ENCODE measurements at regions of chr12 and their contacts with region 1.

Region 1: DNA sequence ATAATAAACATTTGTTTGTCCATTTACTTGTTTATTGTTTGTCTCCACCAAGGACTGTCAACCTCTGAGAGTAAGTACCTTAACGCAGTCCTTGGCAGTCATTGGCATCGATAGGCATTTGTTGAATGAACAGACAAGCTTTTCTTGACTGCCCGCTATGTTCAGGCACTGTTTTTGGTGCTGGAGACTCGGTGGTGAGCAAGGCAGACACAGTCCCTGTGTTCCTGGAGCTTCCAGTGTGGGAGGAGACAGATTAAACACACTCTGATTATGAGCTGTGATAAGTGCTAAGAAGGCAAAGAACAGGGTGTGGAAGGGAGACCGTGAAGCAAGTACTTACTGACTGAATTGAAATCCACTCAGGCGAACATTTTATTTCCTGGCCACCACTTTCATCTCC is 1.2 kb downstream of the ATP6V0A2 start:
- DNase-seq: peak; percentile 35
- ATAC-seq: peak; percentile 11
- H3K4me3 Mint-ChIP-seq: peak overlapping the region; percentile 96
- H3K27ac Mint-ChIP-seq: peak overlapping the region; percentile 96
- H3K4me1 Mint-ChIP-seq: peaks cover 46% of the 10 kb centered on the region
- H3K27me3 Mint-ChIP-seq: no peaks in the 10 kb centered on the region

Region 2: DNA sequence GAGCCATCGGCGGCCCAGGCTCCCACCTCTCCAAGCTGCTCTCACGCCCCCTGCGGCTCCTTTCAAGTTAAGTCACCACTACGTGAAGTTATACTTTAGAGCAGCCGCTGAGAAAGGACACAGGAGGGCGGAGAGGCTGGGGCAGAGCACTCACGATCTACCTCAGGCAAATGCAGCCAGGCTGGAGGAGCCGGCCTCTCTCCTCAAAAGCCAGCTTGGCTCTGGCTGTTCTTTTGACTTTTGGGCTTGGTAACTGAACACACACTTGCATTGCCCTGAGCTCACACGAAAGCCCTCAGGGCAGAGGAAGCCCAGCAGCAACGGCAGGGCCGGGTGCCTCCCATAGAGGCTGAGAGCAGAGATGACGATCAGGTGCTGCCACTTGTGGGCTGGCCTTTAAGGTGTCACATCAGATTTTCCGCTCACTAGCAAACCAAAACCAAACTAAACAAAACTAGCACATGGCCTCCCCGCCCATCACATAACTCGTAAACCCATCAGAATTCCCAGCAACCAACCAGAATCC is 637.7 kb before region 1 on chr12:
- CTCF ChIA-PET with region 1: no interaction called
- POLR2A ChIA-PET with region 1: interaction called, 4 read pairs
- intact Hi-C with region 1: loop called in 1 of 2 experiments (anchors 2 kb)
- DNase-seq: peak; percentile 87
- ATAC-seq: peak; percentile 75
- H3K4me3 Mint-ChIP-seq: peak overlapping the region; percentile 68
- H3K27ac Mint-ChIP-seq: peak overlapping the region; percentile 94
- H3K4me1 Mint-ChIP-seq: peaks cover 56% of the 10 kb centered on the region
- H3K27me3 Mint-ChIP-seq: no peaks in the 10 kb centered on the region

Region 3: GRCh38 chr12:123457980-123458783 is 255.2 kb before region 1 on chr12 and contains the start of gene SNRNP35:
- CTCF ChIA-PET with region 1: no interaction called
- POLR2A ChIA-PET with region 1: no interaction called
- intact Hi-C with region 1: loop called (anchors 5 to 10 kb)
- DNase-seq: peak; percentile 88
- ATAC-seq: peak; percentile 73
- H3K4me3 Mint-ChIP-seq: peak within 1 kb of the TSS; percentile 98
- H3K27ac Mint-ChIP-seq: peak within 1 kb of the TSS; percentile 100
- H3K4me1 Mint-ChIP-seq: peaks cover 26% of the 10 kb centered on the region
- H3K27me3 Mint-ChIP-seq: no peaks in the 10 kb centered on the region
- total RNA-seq, gene SNRNP35: 24.1 to 24.8 TPM

Region 4: DNA sequence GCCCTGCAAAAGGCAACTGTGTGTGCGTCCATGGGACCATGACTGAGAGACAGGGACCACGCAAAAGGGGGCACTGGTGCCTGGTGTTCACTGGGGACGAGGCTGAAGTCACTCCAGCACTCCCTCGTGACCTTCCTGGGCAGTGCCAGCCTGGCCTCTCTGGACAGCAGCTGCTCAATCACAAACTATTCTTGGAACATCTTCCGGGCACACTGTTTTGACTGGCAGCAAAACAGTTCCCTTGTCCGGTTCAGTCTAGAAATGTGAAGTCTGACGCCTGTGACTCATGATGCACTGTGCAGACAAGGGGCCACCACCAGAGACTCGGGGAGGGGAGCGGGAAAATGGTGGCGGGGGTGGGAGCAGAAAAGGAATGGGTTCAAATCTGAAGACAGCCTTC is 234.6 kb before region 1 on chr12:
- CTCF ChIA-PET with region 1: no interaction called
- POLR2A ChIA-PET with region 1: no interaction called
- intact Hi-C with region 1: no loop called
- DNase-seq: no peak
- ATAC-seq: no peak
- H3K4me3 Mint-ChIP-seq: no peak overlapping the region
- H3K27ac Mint-ChIP-seq: no peak overlapping the region
- H3K4me1 Mint-ChIP-seq: peaks cover 23% of the 10 kb centered on the region
- H3K27me3 Mint-ChIP-seq: no peaks in the 10 kb centered on the region

Region 5: DNA sequence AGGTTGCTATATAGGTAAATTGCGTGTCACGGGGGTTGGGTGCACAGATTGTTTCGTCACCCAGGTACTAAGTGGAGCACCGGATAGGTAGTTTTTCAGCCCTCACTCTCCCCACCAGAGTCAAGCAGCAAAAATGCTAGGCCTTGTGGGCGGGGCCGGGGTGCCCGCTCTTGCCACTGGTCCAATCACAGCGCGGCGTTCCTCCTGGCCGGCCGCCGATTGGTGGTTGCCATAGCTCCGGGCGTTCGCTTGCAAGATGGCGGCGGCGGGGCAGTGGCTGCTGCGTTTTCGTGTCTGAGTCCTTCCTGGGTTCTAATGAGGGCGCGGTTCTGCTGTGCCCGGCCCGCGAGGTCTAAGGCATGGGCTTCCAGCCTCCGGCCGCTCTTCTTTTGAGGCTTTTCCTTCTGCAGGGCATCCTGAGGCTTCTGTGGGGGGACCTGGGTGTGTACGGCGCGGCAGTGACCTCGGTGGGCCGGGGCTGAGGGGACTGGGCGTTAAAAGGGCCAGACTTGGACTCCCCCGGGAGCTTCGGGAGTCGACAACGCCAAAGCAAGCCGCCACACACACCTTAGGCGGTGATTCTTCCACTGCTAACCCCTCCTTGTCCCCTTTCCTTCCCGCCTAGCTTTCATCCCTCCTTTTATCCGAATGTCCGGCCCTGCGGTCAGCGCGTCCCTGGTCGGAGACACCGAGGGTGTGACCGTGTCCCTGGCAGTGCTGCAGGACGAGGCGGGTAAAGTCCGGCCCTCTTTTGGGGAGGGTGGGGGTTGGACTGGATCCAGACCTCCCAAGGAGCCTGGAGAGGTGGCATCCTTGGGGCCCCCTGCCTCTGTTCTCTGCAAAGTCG is 42.3 kb before region 1 on chr12 and contains the start of gene TCTN2:
- CTCF ChIA-PET with region 1: interaction called, 4 read pairs
- POLR2A ChIA-PET with region 1: interaction called, 5 read pairs
- intact Hi-C with region 1: loop called (anchors 1 to 5 kb)
- DNase-seq: peak; percentile 98
- ATAC-seq: peak; percentile 100
- H3K4me3 Mint-ChIP-seq: peak within 1 kb of the TSS; percentile 78
- H3K27ac Mint-ChIP-seq: peak within 1 kb of the TSS; percentile 25
- H3K4me1 Mint-ChIP-seq: peaks cover 15% of the 10 kb centered on the region
- H3K27me3 Mint-ChIP-seq: no peaks in the 10 kb centered on the region
- total RNA-seq, gene TCTN2: 4.4 to 4.5 TPM

Region 6: DNA sequence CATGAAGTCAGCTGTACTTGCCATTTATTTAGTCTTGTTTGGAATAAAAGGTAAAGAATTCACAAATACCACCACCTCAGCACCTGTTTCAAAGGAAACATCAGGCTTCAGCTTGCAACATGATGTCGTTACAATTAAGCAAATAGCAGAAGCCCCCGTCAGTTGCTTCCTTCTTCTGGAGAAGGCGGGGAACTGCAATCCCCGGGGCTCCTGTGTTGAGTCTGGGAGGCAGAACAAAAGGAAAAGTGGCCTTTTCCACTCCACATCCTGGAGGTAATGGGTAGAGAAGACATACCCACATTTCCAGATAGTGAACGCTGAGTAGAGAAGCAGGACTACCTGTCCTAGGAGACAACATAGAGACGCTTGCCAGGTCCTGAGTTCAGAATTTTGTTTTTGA is 141.5 kb after region 1 on chr12:
- CTCF ChIA-PET with region 1: no interaction called
- POLR2A ChIA-PET with region 1: no interaction called
- intact Hi-C with region 1: no loop called
- DNase-seq: no peak
- ATAC-seq: no peak
- H3K4me3 Mint-ChIP-seq: no peak overlapping the region
- H3K27ac Mint-ChIP-seq: no peak overlapping the region
- H3K4me1 Mint-ChIP-seq: no peaks in the 10 kb centered on the region
- H3K27me3 Mint-ChIP-seq: peaks cover 1% of the 10 kb centered on the region

Region 7: GRCh38 chr12:123972457-123973401 is 259.3 kb after region 1 on chr12 and contains the starts of genes CCDC92 and ZNF664:
- CTCF ChIA-PET with region 1: no interaction called
- POLR2A ChIA-PET with region 1: no interaction called
- intact Hi-C with region 1: loop called in 1 of 2 experiments (anchors 1 kb)
- DNase-seq: peak; percentile 98
- ATAC-seq: peak; percentile 87
- H3K4me3 Mint-ChIP-seq: peak within 1 kb of the TSS; percentile 87
- H3K27ac Mint-ChIP-seq: peak within 1 kb of the TSS; percentile 89
- H3K4me1 Mint-ChIP-seq: peaks cover 48% of the 10 kb centered on the region
- H3K27me3 Mint-ChIP-seq: no peaks in the 10 kb centered on the region
- total RNA-seq, gene CCDC92: 8.7 to 11.0 TPM
- total RNA-seq, gene ZNF664: 46.4 to 48.3 TPM

Region 8: DNA sequence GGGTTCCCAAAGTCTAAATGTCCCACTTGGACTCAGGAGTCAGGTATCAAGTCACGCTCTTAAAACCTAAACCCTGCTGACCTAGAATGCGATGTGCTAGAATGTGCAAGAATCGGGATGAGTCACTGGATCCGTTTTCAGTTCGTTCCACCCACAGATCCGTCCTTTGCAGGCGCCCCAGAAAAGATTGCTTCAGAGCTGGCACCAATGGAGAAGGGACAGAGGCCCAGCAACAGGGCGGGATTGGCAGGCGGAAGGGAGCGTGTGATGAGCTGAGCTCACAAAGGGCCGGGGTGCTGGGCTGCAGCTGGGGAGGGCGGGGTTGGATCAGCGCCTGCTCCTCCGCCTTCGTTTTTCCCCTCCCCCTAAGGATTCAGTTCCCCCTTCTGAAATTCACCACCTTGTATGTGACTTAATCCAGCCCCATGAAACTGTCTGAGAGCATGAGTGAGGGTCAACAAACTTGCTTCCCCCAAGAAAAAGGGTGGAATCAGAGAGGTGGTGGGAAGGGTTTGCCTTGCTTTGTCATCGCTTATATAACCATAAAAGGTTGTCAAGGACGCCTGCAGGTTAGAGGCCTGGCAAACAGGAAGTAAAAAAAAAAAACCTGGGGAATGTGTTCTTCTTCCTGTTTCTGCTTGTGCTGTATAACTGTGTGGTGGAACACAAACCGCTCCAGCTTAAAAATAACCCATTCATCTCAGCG is 1203.9 kb after region 1 on chr12:
- CTCF ChIA-PET with region 1: no interaction called
- POLR2A ChIA-PET with region 1: no interaction called
- intact Hi-C with region 1: loop called in 1 of 2 experiments (anchors 2 kb)
- DNase-seq: peak; percentile 97
- ATAC-seq: peak; percentile 69
- H3K4me3 Mint-ChIP-seq: peak overlapping the region; percentile 100
- H3K27ac Mint-ChIP-seq: peak overlapping the region; percentile 100
- H3K4me1 Mint-ChIP-seq: peaks cover 86% of the 10 kb centered on the region
- H3K27me3 Mint-ChIP-seq: no peaks in the 10 kb centered on the region